Heart left ventricle (tissue), 16 donors: ENCODE measurements at regions of chr15 and their contacts with region 1.

Region 1: GRCh38 chr15:72199711-72200212 is 2.2 kb upstream of the GRAMD2A start:
- DNase-seq: peak; percentile 75 to 86 (median 79)
- ATAC-seq: peak; percentile 35 to 64 (median 53)
- H3K4me3 ChIP-seq: no peak overlapping the region
- H3K27ac ChIP-seq: peak overlapping the region in 8 of 12 donors; percentile 32 to 80 (median 62)
- H3K4me1 ChIP-seq: peaks cover 6 to 63% (median 51%) of the 10 kb centered on the region in 12 donors
- H3K27me3 ChIP-seq: peaks cover 0 to 11% (median 0%) of the 10 kb centered on the region in 9 donors
- CTCF ChIP-seq: peak; percentile 87 to 96 (median 90)
- POLR2A ChIP-seq: no peak

Region 2: DNA sequence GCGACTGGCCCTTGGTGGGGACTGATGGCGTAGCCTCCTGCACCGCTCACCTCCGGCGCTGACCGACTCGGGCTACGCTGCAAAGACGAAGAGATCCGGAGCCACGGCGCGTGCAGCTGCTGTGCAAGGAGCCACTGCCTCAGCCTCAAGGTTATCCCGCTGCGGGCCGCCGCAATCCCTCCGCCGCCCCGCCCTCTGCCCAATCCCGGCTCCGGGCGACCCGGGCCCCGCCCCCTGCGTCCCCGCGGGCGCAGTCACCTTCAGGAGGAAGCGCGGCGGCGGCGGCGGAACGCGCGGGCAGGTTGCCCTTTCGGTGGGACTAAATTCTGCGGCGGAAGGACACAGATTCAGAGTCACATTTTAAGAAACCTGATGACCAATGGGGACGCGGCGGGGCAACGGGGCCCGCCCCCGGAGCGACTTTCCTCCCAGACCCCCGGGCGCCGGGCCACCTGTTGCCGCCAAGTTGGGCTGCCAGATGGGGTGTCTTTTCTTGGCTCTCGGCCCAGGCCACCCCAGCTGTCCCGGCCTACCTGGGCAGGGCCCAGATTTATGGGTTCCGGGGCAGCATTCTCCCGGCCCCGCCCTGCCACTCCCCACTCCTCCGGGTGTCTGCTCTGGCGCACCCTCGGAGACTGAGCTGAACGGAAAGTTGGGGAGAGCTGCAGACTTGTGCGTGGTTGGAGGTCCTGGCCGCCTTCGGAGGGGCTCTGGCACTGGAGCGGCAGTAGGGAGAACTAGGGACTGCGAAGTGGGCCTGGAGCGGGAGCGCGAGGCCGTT is 31.5 kb after region 1 on chr15 and contains the start of gene PKM:
- intact Hi-C with region 1: loop called in 5 of 10 experiments (anchors 1 to 5 kb)
- DNase-seq: peak; percentile 96 to 98 (median 97)
- ATAC-seq: peak; percentile 79 to 90 (median 88)
- H3K4me3 ChIP-seq: peak within 1 kb of the TSS; percentile 73 to 99 (median 89)
- H3K27ac ChIP-seq: peak within 1 kb of the TSS; percentile 95 to 100 (median 99)
- H3K4me1 ChIP-seq: peaks cover 4 to 49% (median 42%) of the 10 kb centered on the region in 12 donors
- H3K27me3 ChIP-seq: no peaks in the 10 kb centered on the region
- CTCF ChIP-seq: peak in 1 of 12 donors; percentile 6
- POLR2A ChIP-seq: peak; percentile 57 to 95
- total RNA-seq, gene PKM: 648 to 1,279 (median 923) TPM

Region 3: GRCh38 chr15:72237286-72238224 is 37.8 kb after region 1 on chr15:
- intact Hi-C with region 1: loop called in 2 of 10 experiments (anchors 5 kb)
- DNase-seq: peak in 4 of 5 donors; percentile 44 to 82 (median 72)
- ATAC-seq: peak in 3 of 4 donors; percentile 80 to 93 (median 90)
- H3K4me3 ChIP-seq: peak overlapping the region in 1 of 12 donors; percentile 36
- H3K27ac ChIP-seq: peak overlapping the region in 7 of 12 donors; percentile 12 to 74 (median 22)
- H3K4me1 ChIP-seq: peaks cover 0 to 29% (median 3%) of the 10 kb centered on the region in 12 donors
- H3K27me3 ChIP-seq: no peaks in the 10 kb centered on the region
- CTCF ChIP-seq: no peak
- POLR2A ChIP-seq: no peak

Region 4: GRCh38 chr15:72265031-72265430 is 65.3 kb after region 1 on chr15:
- intact Hi-C with region 1: loop called in 3 of 10 experiments (anchors 5 to 10 kb)
- DNase-seq: no peak
- ATAC-seq: no peak
- H3K4me3 ChIP-seq: no peak overlapping the region
- H3K27ac ChIP-seq: no peak overlapping the region
- H3K4me1 ChIP-seq: peaks cover 0 to 5% (median 0%) of the 10 kb centered on the region in 12 donors
- H3K27me3 ChIP-seq: no peaks in the 10 kb centered on the region
- CTCF ChIP-seq: no peak
- POLR2A ChIP-seq: no peak

Region 5: DNA sequence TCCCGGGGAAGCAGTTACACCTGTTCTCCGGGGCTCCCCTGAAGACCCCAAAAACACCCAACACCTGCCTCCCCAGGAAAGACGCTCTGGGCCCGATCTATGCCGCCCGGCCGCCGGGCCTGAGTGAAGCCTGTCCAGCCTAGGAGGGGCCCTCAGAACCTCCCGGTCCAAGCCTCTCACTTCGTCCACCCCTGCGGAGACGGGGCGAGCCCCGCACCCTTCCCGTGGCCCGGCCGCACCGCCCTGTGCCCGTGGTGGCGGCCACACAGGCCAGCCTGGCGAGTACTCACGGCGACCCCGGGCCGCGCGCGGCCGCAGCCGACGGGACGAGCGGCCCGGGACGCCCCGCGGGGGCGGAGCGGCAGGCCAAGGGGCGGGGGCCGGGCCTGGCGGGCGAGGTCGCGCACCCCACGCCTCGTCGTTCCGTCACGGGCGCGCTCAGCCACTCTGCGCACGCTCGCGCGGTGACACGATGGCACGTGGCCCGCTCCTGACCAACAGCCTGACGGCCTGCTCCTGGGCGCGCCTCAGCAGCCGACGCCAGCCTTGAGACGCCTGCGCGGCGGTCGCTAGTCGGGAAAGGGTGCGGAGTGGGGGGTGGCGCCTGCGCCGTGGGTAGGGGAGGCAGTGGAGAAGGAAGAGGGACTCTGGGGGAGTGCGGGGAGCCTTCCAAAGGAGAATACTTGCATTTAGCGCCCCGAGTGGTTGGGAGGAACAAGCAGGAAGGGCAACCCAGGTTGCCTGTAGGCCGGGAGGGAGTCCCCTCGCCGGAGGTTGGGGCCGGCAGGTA is 72.6 kb after region 1 on chr15 and contains the start of gene PARP6:
- intact Hi-C with region 1: loop called in 5 of 10 experiments (anchors 2 to 10 kb)
- DNase-seq: peak; percentile 99 to 100 (median 99)
- ATAC-seq: peak; percentile 99 to 100 (median 100)
- H3K4me3 ChIP-seq: peak within 1 kb of the TSS; percentile 85 to 99 (median 94)
- H3K27ac ChIP-seq: peak within 1 kb of the TSS; percentile 34 to 96 (median 91)
- H3K4me1 ChIP-seq: peaks cover 3 to 32% (median 16%) of the 10 kb centered on the region in 12 donors
- H3K27me3 ChIP-seq: no peaks in the 10 kb centered on the region
- CTCF ChIP-seq: peak; percentile 48 to 91 (median 72)
- POLR2A ChIP-seq: peak in 1 of 2 donors; percentile 67
- total RNA-seq, gene PARP6: 25.6 to 50.3 (median 34.5) TPM

Region 6: DNA sequence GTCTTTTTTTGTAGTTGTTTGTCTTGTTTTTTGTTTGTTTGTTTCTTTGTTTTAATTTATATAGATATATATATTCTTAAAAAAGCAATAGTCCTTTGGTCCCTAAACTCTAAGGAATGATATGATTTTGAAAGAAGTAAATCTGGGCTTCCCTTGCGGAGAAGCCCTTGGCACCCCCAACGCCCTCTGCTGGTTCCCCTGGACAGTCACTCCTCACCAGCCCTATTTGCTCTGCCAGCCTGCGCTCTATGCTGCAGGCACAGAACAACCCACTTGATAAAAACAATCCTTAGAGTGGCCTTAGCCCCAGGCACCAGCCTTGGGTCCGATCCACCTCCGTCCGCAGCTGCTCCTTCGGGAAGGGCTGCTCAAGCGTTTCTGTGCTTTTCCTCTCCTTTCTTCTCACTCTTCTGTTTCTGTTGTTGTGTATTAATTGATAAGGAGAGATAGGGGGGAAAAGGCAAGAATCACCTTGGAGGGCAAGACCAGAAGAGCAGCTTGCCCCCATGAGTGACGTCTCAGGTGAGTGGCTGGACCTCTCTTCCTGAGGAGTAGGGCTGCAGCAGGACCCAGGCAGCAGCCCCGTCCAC is 86.3 kb after region 1 on chr15:
- intact Hi-C with region 1: loop called in 6 of 10 experiments (anchors 2 to 10 kb)
- DNase-seq: peak in 4 of 5 donors; percentile 19 to 52 (median 42)
- ATAC-seq: peak in 3 of 4 donors; percentile 56 to 70 (median 66)
- H3K4me3 ChIP-seq: no peak overlapping the region
- H3K27ac ChIP-seq: no peak overlapping the region
- H3K4me1 ChIP-seq: no peaks in the 10 kb centered on the region
- H3K27me3 ChIP-seq: no peaks in the 10 kb centered on the region
- CTCF ChIP-seq: peak; percentile 32 to 64 (median 48)
- POLR2A ChIP-seq: no peak